Calu3 (cell line): ENCODE measurements at regions of chr2 and their contacts with region 1.

Region 1: GRCh38 chr2:180367815-180368214 is 360.7 kb upstream of the CWC22 start:
- DNase-seq: peak; percentile 43
- H3K4me3 Mint-ChIP-seq: no peak overlapping the region
- H3K27ac Mint-ChIP-seq: peak overlapping the region; percentile 85
- H3K4me1 Mint-ChIP-seq: peaks cover 41% of the 10 kb centered on the region
- H3K27me3 Mint-ChIP-seq: no peaks in the 10 kb centered on the region
- CTCF ChIP-seq: no peak

Region 2: DNA sequence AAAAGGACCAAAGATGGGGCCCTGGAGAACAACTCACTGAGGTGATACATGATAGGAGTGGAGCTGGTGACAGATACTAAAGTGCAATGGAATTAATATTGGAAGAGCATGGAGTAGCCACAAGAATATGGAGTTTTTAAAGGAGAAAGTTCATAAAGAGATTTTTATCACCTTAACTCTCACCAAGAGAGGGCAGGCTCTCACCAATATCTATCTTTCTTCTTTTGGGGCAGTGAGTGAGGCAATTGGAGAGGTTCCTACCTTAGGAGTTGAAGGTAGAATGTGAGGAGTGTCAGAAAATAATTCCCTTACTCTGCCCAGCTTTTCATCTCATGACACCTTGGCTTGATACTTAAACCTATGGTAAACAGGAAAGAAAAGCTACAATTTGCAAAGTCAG is 127.0 kb before region 1 on chr2:
- CTCF ChIA-PET with region 1: no interaction called
- intact Hi-C with region 1: loop called (anchors 5 kb)
- DNase-seq: peak; percentile 21
- H3K4me3 Mint-ChIP-seq: no peak overlapping the region
- H3K27ac Mint-ChIP-seq: no peak overlapping the region
- H3K4me1 Mint-ChIP-seq: peaks cover 8% of the 10 kb centered on the region
- H3K27me3 Mint-ChIP-seq: no peaks in the 10 kb centered on the region
- CTCF ChIP-seq: peak; percentile 45

Region 3: GRCh38 chr2:180291060-180291459 is 76.8 kb before region 1 on chr2:
- CTCF ChIA-PET with region 1: no interaction called
- intact Hi-C with region 1: loop called (anchors 5 kb)
- DNase-seq: no peak
- H3K4me3 Mint-ChIP-seq: peak overlapping the region; percentile 42
- H3K27ac Mint-ChIP-seq: peak overlapping the region; percentile 80
- H3K4me1 Mint-ChIP-seq: peaks cover 50% of the 10 kb centered on the region
- H3K27me3 Mint-ChIP-seq: no peaks in the 10 kb centered on the region
- CTCF ChIP-seq: no peak

Region 4: GRCh38 chr2:180411661-180412060 is 43.8 kb after region 1 on chr2:
- CTCF ChIA-PET with region 1: no interaction called
- intact Hi-C with region 1: loop called (anchors 5 kb)
- DNase-seq: peak; percentile 30
- H3K4me3 Mint-ChIP-seq: peak overlapping the region; percentile 40
- H3K27ac Mint-ChIP-seq: peak overlapping the region; percentile 83
- H3K4me1 Mint-ChIP-seq: peaks cover 29% of the 10 kb centered on the region
- H3K27me3 Mint-ChIP-seq: no peaks in the 10 kb centered on the region
- CTCF ChIP-seq: no peak

Region 5: GRCh38 chr2:180970016-180970415 is 602.2 kb after region 1 on chr2:
- CTCF ChIA-PET with region 1: no interaction called
- intact Hi-C with region 1: loop called (anchors 5 kb)
- DNase-seq: no peak
- H3K4me3 Mint-ChIP-seq: no peak overlapping the region
- H3K27ac Mint-ChIP-seq: no peak overlapping the region
- H3K4me1 Mint-ChIP-seq: no peaks in the 10 kb centered on the region
- H3K27me3 Mint-ChIP-seq: no peaks in the 10 kb centered on the region
- CTCF ChIP-seq: no peak